ENCODE measurements at regions of chr19 and their contacts with region 1.

Region 1: GRCh38 chr19:45200568-45200994 is 22.0 kb downstream of the BLOC1S3 start:
- DNase-seq: peak in 5 of 7 donors; percentile 19 to 75 (median 57)
- H3K4me3 ChIP-seq: no peak overlapping the region
- H3K27ac ChIP-seq: no peak overlapping the region
- H3K4me1 ChIP-seq: no peaks in the 10 kb centered on the region
- H3K27me3 ChIP-seq: no peaks in the 10 kb centered on the region
- CTCF ChIP-seq: peak in 5 of 6 experiments; percentile 32 to 64 (median 49)
- POLR2A ChIP-seq: no peak

Region 2: DNA sequence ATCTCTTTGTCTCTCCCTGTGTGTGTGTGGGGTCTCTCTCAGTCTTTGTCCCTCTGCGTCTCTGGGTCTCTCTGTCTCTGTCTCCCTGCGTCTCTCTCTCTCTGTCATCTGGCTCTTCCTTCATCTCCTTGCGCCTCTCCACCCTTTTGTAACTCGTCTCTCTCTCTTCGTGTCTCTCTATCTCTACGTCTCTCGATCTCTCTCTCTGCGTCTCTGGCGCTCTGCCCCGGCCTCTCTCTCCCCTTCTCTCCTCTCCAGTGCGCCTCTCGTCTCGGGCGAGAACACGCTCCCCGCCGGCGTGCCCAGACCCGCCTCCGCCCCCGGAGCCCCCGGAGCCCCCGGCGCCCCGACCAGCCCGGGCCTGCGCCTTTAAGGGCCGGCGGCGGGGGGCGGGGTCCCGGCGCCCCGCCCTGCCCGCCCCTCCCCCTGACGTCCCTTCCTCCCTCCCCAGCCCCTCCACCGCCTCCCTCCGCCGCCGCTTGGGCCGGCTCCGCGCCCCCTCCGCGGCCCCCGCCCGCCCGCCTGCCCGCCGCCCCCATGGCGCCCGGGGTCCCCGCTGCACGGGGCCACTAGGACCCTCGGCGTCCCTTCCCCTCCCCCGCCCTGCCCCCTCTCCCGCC is 50.4 kb after region 1 on chr19 and contains the start of gene MARK4:
- intact Hi-C with region 1: loop called in 1 of 2 experiments (anchors 5 kb)
- DNase-seq: peak in 6 of 7 donors; percentile 31 to 62 (median 50)
- H3K4me3 ChIP-seq: peak within 1 kb of the TSS; percentile 28 to 99 (median 66)
- H3K27ac ChIP-seq: peak within 1 kb of the TSS in 3 of 5 donors; percentile 57 to 89 (median 65)
- H3K4me1 ChIP-seq: peaks cover 11 to 25% of the 10 kb centered on the region in 2 donors
- H3K27me3 ChIP-seq: no peaks in the 10 kb centered on the region
- CTCF ChIP-seq: no peak
- POLR2A ChIP-seq: no peak
- total RNA-seq, gene MARK4: 5.6 to 41.9 (median 26.3) TPM

Region 3: DNA sequence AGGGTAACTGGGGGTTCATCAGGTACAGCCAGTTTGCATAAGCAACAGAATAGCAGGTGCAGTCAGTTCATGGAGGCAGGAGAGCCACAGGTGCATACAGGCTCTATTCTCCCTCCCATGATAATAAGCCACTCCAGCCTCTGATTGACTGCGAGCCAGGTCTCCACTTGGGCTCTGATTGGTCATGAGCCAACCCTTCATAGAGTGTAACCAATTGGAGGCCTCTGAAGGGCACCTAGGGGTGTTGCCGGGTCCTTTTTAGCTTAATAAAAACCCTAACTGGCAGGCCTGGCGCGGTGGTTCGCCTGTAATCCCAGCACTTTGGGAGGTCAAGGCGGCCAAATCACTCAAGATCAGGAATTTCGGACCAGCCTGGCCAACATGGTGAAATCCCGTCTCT is 130.8 kb after region 1 on chr19:
- intact Hi-C with region 1: loop called in 1 of 2 experiments (anchors 10 kb)
- DNase-seq: no peak
- H3K4me3 ChIP-seq: no peak overlapping the region
- H3K27ac ChIP-seq: no peak overlapping the region
- H3K4me1 ChIP-seq: no peaks in the 10 kb centered on the region
- H3K27me3 ChIP-seq: no peaks in the 10 kb centered on the region
- CTCF ChIP-seq: no peak
- POLR2A ChIP-seq: no peak

Region 4: DNA sequence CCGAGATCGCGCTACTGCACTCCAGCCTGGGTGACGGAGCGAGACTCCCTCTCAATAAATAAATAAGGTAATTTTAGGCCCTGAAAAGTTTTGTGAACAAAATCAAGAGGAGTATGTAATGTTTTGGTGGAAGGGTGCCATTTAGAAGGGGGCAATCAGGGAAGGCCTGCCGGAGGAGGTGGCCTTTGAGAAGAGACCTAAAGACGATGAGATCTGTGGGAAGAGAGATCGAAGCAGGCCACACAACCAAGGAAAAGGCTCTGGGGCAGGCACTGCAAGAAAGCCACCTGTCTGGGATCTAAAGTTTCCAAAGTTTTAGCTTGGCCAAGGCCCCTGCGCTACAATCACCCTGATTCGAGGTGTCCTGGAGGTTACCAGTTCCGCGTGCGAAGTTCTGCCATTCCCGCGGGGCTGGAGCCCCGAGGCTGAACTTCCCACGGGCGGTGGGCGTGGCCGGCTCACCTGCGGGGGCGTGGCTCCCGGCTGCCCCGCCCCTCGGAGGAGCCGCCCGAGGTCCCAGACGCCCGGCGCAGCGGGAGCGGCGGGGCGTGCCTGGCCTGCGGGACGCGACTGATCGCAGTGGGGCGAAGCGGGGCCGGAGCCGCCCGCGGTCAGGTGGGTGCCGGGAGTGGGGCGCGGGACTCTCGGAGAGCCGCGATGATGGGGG is 139.8 kb after region 1 on chr19 and contains the start of gene KLC3:
- intact Hi-C with region 1: loop called (anchors 5 to 10 kb)
- DNase-seq: no peak
- H3K4me3 ChIP-seq: peak within 1 kb of the TSS in 1 of 4 donors; percentile 46
- H3K27ac ChIP-seq: no peak within 1 kb of the TSS
- H3K4me1 ChIP-seq: peaks cover 0 to 9% of the 10 kb centered on the region in 2 donors
- H3K27me3 ChIP-seq: peaks cover 10% of the 10 kb centered on the region
- CTCF ChIP-seq: no peak
- POLR2A ChIP-seq: no peak
- total RNA-seq, gene KLC3: 0.17 to 0.30 (median 0.28) TPM in 3 of 9 donors, not detected in the others

Measured in adrenal gland (tissue), 19 donors.